ENCODE measurements at regions of chr17 and their contacts with region 1.

Region 1: GRCh38 chr17:81222906-81223761 is at the start of gene CEP131:
- DNase-seq: peak; percentile 98 to 99 (median 98)
- H3K4me3 ChIP-seq: peak within 1 kb of the TSS in 1 of 2 donors; percentile 50
- H3K4me3 Mint-ChIP-seq: peak within 1 kb of the TSS; percentile 73 to 85 (median 79)
- H3K27ac ChIP-seq: peak within 1 kb of the TSS; percentile 54
- H3K27ac Mint-ChIP-seq: peak within 1 kb of the TSS in 5 of 7 donors; percentile 22 to 81 (median 75)
- H3K4me1 ChIP-seq: peaks cover 18% of the 10 kb centered on the region
- H3K4me1 Mint-ChIP-seq: peaks cover 0 to 22% (median 17%) of the 10 kb centered on the region in 4 donors
- H3K27me3 ChIP-seq: no peaks in the 10 kb centered on the region
- H3K27me3 Mint-ChIP-seq: no peaks in the 10 kb centered on the region
- total RNA-seq, gene CEP131: 9.6 to 10.5 TPM

Region 2: DNA sequence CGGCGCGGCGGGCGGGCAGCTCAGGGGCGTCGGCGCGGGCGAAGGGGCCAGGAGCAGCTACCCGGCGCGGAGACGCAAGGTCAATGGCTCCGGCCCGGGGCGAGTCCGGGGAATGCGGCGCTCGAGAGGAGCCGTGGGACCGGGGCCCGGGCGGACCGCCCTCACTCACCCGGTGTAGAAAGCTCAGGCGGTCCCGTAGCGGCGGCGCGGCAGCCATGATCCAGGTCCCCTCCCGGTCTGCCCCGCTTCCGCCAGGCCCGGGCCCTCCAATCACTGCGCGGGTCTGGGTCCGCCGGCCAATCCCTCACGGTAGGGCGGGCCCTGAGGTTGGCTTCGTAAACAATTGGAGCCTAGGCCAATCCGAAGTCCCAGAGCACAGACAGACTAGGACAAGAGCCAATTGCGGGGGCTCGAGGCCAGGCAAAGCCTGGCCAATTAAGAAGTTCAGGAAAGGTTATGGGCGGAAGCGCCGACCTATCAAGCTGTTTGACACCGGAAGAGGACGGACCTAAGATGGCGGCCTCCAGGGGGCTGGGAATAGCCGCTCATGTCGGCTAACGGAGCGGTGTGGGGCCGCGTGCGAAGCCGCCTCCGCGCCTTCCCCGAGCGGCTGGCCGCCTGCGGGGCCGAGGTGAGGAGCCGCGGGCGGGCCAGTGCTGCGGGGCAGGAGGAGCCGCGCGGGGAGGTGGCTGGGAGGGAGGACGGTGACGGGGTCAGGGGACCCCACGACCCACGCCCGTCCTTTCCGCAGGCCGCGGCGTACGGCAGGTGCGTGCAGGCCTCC is 15.9 kb after region 1 on chr17 and contains the starts of genes NDUFAF8 and TEPSIN:
- CTCF ChIA-PET with region 1: interaction called, 6 read pairs
- POLR2A ChIA-PET with region 1: interaction called, 48 read pairs
- intact Hi-C with region 1: loop called (anchors 1 kb)
- DNase-seq: peak; percentile 95 to 99 (median 98)
- H3K4me3 ChIP-seq: peak within 1 kb of the TSS; percentile 76 to 89
- H3K4me3 Mint-ChIP-seq: peak within 1 kb of the TSS; percentile 91 to 96 (median 94)
- H3K27ac ChIP-seq: peak within 1 kb of the TSS; percentile 80
- H3K27ac Mint-ChIP-seq: peak within 1 kb of the TSS; percentile 86 to 95 (median 92)
- H3K4me1 ChIP-seq: peaks cover 37% of the 10 kb centered on the region
- H3K4me1 Mint-ChIP-seq: peaks cover 13 to 42% (median 34%) of the 10 kb centered on the region in 4 donors
- H3K27me3 ChIP-seq: no peaks in the 10 kb centered on the region
- H3K27me3 Mint-ChIP-seq: no peaks in the 10 kb centered on the region
- total RNA-seq, gene NDUFAF8: 40.1 to 45.1 TPM
- total RNA-seq, gene TEPSIN: 111 to 126 TPM

Region 3: DNA sequence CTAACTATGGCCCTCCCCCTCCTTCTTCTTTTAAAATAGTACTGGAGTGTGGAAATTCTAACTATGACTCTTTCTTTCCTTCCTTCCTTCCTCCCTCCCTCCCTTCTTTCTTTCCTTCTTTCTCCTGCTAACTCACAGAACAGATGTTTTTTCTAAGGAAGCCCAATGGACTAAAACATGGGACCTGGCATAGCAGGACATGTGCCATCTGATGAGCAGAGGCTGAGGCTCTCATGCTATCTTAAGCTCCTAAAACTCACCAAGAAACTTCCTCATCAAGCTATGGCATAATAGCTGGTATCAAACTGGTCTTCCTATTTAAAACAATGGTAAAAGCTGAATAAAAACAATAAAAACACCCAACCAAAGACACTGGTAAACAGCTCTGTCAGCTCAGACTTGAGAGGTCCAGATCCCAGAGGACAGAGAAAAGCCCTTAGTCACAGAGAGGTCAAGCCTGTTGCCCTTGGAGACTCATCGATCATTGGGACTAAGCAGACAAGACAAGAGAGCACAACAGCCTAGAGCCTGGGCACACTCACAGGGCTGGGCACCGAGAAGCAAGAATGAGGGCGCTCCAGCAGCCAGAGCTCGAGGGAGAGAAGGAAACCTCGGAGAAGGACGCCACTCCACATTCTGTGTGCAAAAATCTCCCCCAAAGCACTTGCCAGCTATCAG is 44.4 kb after region 1 on chr17:
- CTCF ChIA-PET with region 1: no interaction called
- POLR2A ChIA-PET with region 1: no interaction called
- intact Hi-C with region 1: no loop called
- DNase-seq: no peak
- H3K4me3 ChIP-seq: no peak overlapping the region
- H3K4me3 Mint-ChIP-seq: no peak overlapping the region
- H3K27ac ChIP-seq: no peak overlapping the region
- H3K27ac Mint-ChIP-seq: peak overlapping the region in 4 of 7 donors; percentile 5 to 54 (median 26)
- H3K4me1 ChIP-seq: no peaks in the 10 kb centered on the region
- H3K4me1 Mint-ChIP-seq: peaks cover 0 to 13% (median 5%) of the 10 kb centered on the region in 4 donors
- H3K27me3 ChIP-seq: no peaks in the 10 kb centered on the region
- H3K27me3 Mint-ChIP-seq: no peaks in the 10 kb centered on the region

Region 4: DNA sequence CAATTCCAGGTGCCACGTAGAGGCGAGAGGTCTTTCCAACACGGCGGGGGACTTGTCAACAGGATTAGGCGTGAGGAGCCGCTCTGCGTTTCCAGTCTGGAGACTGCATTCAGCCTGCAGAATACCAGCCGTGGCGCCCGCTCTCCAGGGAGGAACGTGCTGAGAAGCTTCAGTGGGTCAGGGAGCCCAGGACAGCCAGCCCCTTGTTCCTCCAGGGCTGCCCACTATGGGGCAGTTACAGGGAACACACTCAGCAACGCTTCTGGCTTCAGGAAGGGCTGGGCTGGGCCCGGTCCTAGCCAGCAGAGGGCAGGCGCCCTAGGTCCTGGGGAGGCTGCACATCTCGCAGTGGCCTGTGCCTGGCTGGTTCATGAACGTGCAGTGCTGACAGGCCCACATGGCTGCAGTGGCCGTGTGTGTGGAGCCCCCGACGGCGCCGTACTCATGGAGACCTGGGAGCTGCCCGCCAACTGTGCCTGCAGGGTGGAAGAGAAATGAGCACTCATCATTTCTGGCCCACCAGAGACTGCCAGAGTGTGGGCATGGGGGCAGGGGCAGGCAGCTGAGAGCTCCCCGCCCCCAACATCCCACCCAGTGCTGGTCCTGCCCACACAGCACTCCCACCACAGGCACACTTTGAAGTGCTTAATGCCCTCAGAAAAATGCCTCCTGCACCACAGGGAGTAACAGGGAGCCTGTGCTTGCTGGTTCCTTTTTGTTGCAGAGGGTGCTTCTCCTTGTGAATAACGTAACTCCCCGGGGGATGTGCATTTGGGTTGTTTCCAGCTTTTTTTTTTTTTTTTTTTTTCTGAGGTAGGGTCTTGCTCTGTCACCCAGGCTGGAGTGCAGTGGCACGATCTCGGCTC is 336.0 kb after region 1 on chr17:
- CTCF ChIA-PET with region 1: no interaction called
- POLR2A ChIA-PET with region 1: no interaction called
- intact Hi-C with region 1: no loop called
- DNase-seq: no peak
- H3K4me3 ChIP-seq: no peak overlapping the region
- H3K4me3 Mint-ChIP-seq: no peak overlapping the region
- H3K27ac ChIP-seq: no peak overlapping the region
- H3K27ac Mint-ChIP-seq: no peak overlapping the region
- H3K4me1 ChIP-seq: peaks cover 3% of the 10 kb centered on the region
- H3K4me1 Mint-ChIP-seq: peaks cover 1 to 4% (median 2%) of the 10 kb centered on the region in 4 donors
- H3K27me3 ChIP-seq: no peaks in the 10 kb centered on the region
- H3K27me3 Mint-ChIP-seq: no peaks in the 10 kb centered on the region

Measured in CD4-positive, alpha-beta memory T cell (primary cell).